Activated naive CD4-positive, alpha-beta T cell treated with anti-CD3 and anti-CD28 coated beads for 36 hours (primary cell): ENCODE measurements at regions of chr5 and their contacts with region 1.

Region 1: GRCh38 chr5:75717082-75717922 is at the start of gene POC5:
- DNase-seq: peak; percentile 98
- H3K4me3 Mint-ChIP-seq: peak within 1 kb of the TSS; percentile 99
- H3K27ac Mint-ChIP-seq: peak within 1 kb of the TSS; percentile 99
- H3K4me1 Mint-ChIP-seq: peaks cover 30% of the 10 kb centered on the region
- H3K27me3 Mint-ChIP-seq: no peaks in the 10 kb centered on the region
- total RNA-seq, gene POC5: 17.5 to 17.7 TPM

Region 2: GRCh38 chr5:75236322-75237316 is 480.7 kb before region 1 on chr5 and contains the start of gene ANKRD31:
- CTCF ChIA-PET with region 1: interaction called, 3 read pairs
- intact Hi-C with region 1: loop called (anchors 1 kb)
- DNase-seq: peak; percentile 88
- H3K4me3 Mint-ChIP-seq: peak within 1 kb of the TSS; percentile 95
- H3K27ac Mint-ChIP-seq: peak within 1 kb of the TSS; percentile 97
- H3K4me1 Mint-ChIP-seq: peaks cover 17% of the 10 kb centered on the region
- H3K27me3 Mint-ChIP-seq: no peaks in the 10 kb centered on the region
- total RNA-seq, gene ANKRD31: 0.35 to 0.36 TPM

Region 3: DNA sequence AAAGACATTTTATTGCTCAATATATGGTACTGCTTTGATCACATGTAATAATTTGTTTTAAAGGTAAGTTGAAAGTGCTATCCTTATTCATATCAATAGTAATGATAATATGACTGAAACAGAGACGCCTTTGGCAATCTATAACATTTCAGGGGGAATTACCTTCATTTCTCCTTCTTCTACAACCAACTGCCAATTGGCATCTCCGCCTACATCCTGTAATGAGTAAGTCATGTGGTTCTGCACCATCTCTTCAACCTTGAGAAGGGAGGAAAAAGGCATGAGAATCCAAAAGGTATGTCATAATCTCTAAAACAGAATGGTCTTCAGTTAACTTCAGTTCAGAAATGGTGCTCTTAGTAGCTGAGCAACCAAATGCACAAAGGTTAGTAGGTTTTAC is 327.9 kb before region 1 on chr5:
- CTCF ChIA-PET with region 1: no interaction called
- intact Hi-C with region 1: loop called (anchors 1 kb)
- DNase-seq: peak; percentile 48
- H3K4me3 Mint-ChIP-seq: no peak overlapping the region
- H3K27ac Mint-ChIP-seq: peak overlapping the region; percentile 6
- H3K4me1 Mint-ChIP-seq: peaks cover 11% of the 10 kb centered on the region
- H3K27me3 Mint-ChIP-seq: no peaks in the 10 kb centered on the region

Region 4: GRCh38 chr5:75632321-75632720 is 85.0 kb before region 1 on chr5:
- CTCF ChIA-PET with region 1: no interaction called
- intact Hi-C with region 1: no loop called
- DNase-seq: no peak
- H3K4me3 Mint-ChIP-seq: no peak overlapping the region
- H3K27ac Mint-ChIP-seq: no peak overlapping the region
- H3K4me1 Mint-ChIP-seq: no peaks in the 10 kb centered on the region
- H3K27me3 Mint-ChIP-seq: peaks cover 2% of the 10 kb centered on the region

Region 5: DNA sequence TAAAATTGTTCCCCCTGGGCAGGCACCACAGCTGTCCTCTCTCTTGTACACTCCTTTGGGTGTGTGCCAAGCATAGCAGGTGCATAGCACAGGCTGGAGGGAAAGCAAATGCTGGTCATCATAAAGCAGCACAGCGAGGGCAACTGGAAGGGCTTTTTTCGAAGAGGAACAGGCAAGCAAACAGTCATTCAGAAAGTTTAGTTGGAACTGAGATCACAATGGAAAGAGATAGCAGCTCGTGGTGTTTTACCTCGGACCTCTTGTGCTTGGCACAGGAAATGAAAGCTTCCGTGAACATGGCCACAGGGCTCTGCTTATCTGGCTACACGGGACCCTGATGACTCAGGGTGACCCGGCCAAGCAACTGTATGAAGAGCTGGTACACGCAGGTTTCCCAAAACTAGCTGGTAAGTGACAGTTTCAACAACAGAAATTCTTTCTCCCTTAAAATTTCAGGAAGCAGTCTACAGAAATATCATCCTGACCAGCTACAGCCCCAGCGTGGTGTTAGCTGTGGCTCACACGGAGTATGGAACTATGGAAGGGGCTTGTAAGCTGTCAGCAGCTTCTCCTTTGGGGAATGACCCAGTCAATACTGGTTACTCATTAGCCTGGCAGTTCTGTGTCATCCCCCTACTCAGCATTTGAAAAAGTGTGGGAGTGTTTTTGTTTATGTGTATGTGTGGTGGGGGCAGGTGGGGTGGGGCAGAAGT is 48.2 kb before region 1 on chr5:
- CTCF ChIA-PET with region 1: no interaction called
- intact Hi-C with region 1: loop called (anchors 1 kb)
- DNase-seq: peak; percentile 82
- H3K4me3 Mint-ChIP-seq: peak overlapping the region; percentile 49
- H3K27ac Mint-ChIP-seq: peak overlapping the region; percentile 70
- H3K4me1 Mint-ChIP-seq: peaks cover 30% of the 10 kb centered on the region
- H3K27me3 Mint-ChIP-seq: no peaks in the 10 kb centered on the region

Region 6: DNA sequence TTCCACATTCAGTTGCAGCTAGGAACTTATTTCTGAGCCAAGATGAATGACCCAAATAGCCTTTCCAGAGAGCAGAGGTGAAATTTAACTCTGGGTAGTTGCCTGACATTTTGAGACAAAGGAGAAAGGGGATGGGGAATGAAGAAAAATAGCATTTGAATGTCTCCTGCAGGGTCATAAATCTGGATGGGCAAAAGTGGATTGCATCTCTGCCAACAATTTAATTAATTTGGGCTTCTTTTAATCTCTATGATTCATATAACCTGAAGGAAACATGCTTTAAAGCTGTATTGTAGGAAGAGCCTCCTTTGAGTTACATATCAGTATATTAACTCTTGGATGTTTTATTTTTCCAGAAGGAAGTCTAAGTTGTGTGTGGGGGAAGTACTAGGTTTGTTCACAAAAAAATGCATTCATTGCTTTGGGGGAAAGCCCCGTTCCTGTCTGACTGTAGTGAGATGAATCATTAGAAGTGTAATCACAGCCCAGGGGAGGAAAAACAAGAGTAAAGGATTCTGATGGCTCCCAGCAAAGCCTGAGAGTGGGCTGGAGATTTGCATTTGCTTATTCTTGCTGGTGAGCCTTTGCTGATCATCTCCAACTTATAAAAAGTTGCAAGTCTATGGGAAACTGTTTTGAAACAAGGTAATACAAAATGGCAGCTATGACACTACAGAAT is 552.8 kb after region 1 on chr5:
- CTCF ChIA-PET with region 1: no interaction called
- intact Hi-C with region 1: no loop called
- DNase-seq: peak; percentile 65
- H3K4me3 Mint-ChIP-seq: peak overlapping the region; percentile 10
- H3K27ac Mint-ChIP-seq: peak overlapping the region; percentile 83
- H3K4me1 Mint-ChIP-seq: peaks cover 21% of the 10 kb centered on the region
- H3K27me3 Mint-ChIP-seq: no peaks in the 10 kb centered on the region

Region 7: GRCh38 chr5:76582230-76583162 is 865.2 kb after region 1 on chr5:
- CTCF ChIA-PET with region 1: no interaction called
- intact Hi-C with region 1: loop called (anchors 1 kb)
- DNase-seq: peak; percentile 65
- H3K4me3 Mint-ChIP-seq: no peak overlapping the region
- H3K27ac Mint-ChIP-seq: peak overlapping the region; percentile 36
- H3K4me1 Mint-ChIP-seq: peaks cover 27% of the 10 kb centered on the region
- H3K27me3 Mint-ChIP-seq: no peaks in the 10 kb centered on the region